ENCODE measurements at regions of chr15 and their contacts with region 1.

Region 1: GRCh38 chr15:45399381-45400212 is 21.3 kb upstream of the GATM start:
- DNase-seq: no peak
- H3K4me3 ChIP-seq: no peak overlapping the region
- H3K27ac ChIP-seq: no peak overlapping the region
- H3K4me1 ChIP-seq: peaks cover 30% of the 10 kb centered on the region
- H3K27me3 ChIP-seq: no peaks in the 10 kb centered on the region
- CTCF ChIP-seq: peak; percentile 80

Region 2: DNA sequence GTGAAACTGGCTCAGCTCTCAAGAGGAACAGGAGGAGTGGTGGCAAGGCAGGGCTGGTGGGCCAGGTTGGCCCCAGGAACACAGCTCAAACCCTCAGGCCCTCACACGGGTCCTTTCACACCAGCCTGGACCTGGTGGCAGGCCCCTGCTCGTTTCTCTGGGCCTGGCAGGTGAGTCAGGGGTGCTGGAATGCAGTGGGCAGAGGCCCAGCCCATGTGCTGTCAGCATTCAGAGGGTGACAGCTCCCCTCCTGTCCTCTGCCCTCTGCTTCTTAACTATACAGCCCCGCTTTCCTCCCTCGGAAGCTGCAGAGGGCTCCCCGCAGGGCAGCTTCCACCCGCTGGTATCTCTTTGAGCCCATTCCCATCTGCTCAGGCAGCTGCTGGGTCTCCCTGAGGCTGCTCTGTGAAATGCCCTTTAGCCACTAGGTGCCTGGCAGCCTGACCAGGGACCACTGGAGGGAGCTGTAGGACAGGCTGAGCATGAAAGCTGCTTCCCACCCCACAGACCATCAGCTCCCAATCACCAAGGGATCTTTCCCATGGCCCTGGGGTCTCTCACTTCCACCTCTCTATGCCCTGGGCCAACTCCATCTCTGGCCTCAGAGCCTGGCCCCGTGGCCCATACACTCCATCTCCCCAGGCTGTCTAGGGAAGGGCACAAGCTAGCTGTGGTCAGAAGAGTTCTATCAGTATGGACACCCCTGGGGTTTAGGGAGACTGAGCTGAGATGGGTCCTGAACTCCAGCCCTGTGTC is 236.6 kb before region 1 on chr15:
- intact Hi-C with region 1: loop called (anchors 5 kb)
- DNase-seq: peak; percentile 73
- H3K4me3 ChIP-seq: no peak overlapping the region
- H3K27ac ChIP-seq: no peak overlapping the region
- H3K4me1 ChIP-seq: peaks cover 33% of the 10 kb centered on the region
- H3K27me3 ChIP-seq: no peaks in the 10 kb centered on the region
- CTCF ChIP-seq: peak; percentile 92

Region 3: DNA sequence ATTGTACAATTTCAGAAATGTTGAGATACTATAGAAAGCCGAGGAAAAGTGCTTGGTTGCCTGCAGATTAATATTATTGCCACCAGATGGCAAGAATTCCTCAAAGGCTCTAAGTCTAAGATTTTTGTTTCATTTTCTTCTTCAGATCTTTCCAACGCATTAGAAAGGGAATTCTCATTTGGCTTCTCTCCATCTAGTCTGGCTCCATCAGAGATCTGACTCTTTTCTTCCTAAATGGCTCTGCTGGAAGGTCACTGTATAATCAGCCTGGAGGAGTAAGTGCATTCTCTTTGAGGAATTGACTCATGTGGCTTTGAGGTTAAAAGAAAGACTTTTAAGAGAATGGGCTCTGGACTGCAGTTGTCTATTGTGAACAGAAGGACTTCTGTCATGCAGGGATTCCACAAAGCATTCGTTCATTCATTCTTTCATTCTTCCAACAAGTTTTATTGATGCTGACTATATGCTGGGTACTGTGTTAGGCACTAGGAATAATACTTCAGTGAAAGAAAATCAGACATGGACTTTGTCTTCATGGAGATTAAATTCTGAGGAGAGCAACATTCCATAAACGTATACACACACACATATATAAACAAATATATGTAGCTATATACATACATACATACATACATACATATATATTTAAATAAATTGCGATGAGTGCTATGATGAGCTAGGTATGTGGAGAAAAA is 92.2 kb before region 1 on chr15:
- intact Hi-C with region 1: loop called (anchors 5 kb)
- DNase-seq: no peak
- H3K4me3 ChIP-seq: peak overlapping the region; percentile 46
- H3K27ac ChIP-seq: peak overlapping the region; percentile 22
- H3K4me1 ChIP-seq: peaks cover 4% of the 10 kb centered on the region
- H3K27me3 ChIP-seq: peaks cover 7% of the 10 kb centered on the region
- CTCF ChIP-seq: peak; percentile 73

Measured in left ventricle myocardium inferior (tissue), 1 donor.